Activated CD4-positive, alpha-beta T cell treated with anti-CD3 and anti-CD28 coated beads for 36 hours (primary cell): ENCODE measurements at regions of chr2 and their contacts with region 1.

Region 1: GRCh38 chr2:130169896-130170295 is 11.5 kb downstream of the SMPD4 start:
- DNase-seq: no peak
- ATAC-seq: no peak
- H3K4me3 Mint-ChIP-seq: no peak overlapping the region
- H3K27ac Mint-ChIP-seq: no peak overlapping the region
- H3K4me1 Mint-ChIP-seq: no peaks in the 10 kb centered on the region
- H3K27me3 Mint-ChIP-seq: no peaks in the 10 kb centered on the region

Region 2: DNA sequence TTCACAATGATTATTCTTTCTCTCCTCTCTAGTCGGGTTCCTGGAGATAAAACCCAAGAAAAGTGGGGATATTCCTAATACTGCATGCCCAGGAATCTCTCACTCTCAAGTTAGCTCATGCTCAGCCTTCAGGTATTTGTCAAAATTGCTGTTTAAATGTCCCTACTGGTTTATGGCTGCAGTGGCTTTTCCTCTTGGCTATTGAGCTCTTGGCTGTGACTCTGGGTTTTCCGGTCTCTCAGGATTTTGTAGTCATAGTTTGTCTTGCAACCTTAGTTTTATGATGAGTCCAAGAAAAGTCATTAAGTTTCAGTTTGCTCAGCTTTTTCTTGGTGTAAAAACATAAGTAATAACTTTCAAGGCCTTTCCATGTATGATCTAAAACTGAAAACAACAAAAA is 1030.5 kb before region 1 on chr2:
- CTCF ChIA-PET with region 1: no interaction called
- POLR2A ChIA-PET with region 1: no interaction called
- intact Hi-C with region 1: no loop called
- DNase-seq: no peak
- ATAC-seq: no peak
- H3K4me3 Mint-ChIP-seq: no peak overlapping the region
- H3K27ac Mint-ChIP-seq: no peak overlapping the region
- H3K4me1 Mint-ChIP-seq: no peaks in the 10 kb centered on the region
- H3K27me3 Mint-ChIP-seq: no peaks in the 10 kb centered on the region

Region 3: DNA sequence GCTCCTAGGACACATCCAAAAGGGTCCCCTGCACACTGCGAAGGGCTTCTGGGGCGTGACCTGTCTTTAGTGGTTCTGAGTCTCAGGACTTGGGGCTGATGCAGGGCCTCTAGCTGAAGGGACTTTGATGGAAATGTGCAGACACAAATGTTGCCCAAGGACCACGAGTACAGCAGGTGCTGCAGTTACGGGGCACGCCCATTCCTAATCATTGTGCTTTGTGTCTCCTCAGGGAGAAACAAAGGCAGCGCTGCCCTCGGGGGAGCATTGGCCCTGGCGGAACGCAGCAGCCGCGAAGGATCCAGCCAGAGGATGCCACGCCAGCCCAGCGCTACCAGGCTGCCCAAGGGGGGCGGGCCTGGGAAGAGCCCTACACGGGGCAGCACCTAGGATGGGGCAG is 20.3 kb after region 1 on chr2:
- CTCF ChIA-PET with region 1: no interaction called
- POLR2A ChIA-PET with region 1: no interaction called
- intact Hi-C with region 1: no loop called
- DNase-seq: no peak
- ATAC-seq: no peak
- H3K4me3 Mint-ChIP-seq: no peak overlapping the region
- H3K27ac Mint-ChIP-seq: no peak overlapping the region
- H3K4me1 Mint-ChIP-seq: no peaks in the 10 kb centered on the region
- H3K27me3 Mint-ChIP-seq: no peaks in the 10 kb centered on the region

Region 4: DNA sequence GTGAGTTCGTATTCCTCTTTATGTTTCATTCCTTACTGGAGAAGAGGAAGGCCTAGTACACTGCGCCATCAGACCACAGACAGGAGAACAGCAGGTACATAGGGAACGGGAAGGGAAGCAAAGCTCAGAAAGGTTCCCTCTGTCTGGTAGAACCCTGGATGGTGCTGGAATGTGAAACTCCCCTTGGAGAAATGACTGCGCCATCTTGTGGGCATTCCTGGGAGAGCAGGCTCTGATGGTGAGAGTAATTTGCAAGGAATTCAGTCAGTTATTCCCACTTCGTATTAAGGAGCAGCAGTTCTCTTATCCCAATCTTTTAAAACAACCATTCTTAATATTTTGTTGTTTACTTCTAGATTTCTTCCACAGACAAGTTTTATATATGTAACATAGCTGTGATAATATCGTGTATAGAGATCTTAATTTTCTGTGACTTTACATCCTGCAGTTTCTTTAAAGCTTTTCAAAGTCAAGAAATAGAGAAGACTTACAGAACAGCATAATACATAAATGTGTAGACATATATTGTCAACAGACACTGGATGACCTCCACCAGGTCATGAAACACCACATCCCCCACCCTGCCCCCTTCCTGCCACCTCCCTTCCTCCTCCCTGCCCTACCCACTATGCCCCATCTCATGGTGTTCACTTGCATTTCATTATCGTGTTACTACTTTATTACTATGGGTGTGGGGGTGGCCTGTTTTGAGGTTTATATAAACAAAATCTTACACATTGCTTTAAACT is 750.7 kb after region 1 on chr2:
- CTCF ChIA-PET with region 1: no interaction called
- POLR2A ChIA-PET with region 1: no interaction called
- intact Hi-C with region 1: no loop called
- DNase-seq: peak; percentile 71
- ATAC-seq: no peak
- H3K4me3 Mint-ChIP-seq: no peak overlapping the region
- H3K27ac Mint-ChIP-seq: no peak overlapping the region
- H3K4me1 Mint-ChIP-seq: no peaks in the 10 kb centered on the region
- H3K27me3 Mint-ChIP-seq: peaks cover 5% of the 10 kb centered on the region

Region 5: GRCh38 chr2:130963849-130964793 is 794.2 kb after region 1 on chr2:
- CTCF ChIA-PET with region 1: no interaction called
- POLR2A ChIA-PET with region 1: interaction called, 10 read pairs
- intact Hi-C with region 1: no loop called
- DNase-seq: peak; percentile 47
- ATAC-seq: peak; percentile 30
- H3K4me3 Mint-ChIP-seq: peak overlapping the region; percentile 42
- H3K27ac Mint-ChIP-seq: no peak overlapping the region
- H3K4me1 Mint-ChIP-seq: peaks cover 6% of the 10 kb centered on the region
- H3K27me3 Mint-ChIP-seq: peaks cover 40% of the 10 kb centered on the region